Tibial artery (tissue), 4 donors: ENCODE measurements at regions of chr6 and their contacts with region 1.

Region 1: DNA sequence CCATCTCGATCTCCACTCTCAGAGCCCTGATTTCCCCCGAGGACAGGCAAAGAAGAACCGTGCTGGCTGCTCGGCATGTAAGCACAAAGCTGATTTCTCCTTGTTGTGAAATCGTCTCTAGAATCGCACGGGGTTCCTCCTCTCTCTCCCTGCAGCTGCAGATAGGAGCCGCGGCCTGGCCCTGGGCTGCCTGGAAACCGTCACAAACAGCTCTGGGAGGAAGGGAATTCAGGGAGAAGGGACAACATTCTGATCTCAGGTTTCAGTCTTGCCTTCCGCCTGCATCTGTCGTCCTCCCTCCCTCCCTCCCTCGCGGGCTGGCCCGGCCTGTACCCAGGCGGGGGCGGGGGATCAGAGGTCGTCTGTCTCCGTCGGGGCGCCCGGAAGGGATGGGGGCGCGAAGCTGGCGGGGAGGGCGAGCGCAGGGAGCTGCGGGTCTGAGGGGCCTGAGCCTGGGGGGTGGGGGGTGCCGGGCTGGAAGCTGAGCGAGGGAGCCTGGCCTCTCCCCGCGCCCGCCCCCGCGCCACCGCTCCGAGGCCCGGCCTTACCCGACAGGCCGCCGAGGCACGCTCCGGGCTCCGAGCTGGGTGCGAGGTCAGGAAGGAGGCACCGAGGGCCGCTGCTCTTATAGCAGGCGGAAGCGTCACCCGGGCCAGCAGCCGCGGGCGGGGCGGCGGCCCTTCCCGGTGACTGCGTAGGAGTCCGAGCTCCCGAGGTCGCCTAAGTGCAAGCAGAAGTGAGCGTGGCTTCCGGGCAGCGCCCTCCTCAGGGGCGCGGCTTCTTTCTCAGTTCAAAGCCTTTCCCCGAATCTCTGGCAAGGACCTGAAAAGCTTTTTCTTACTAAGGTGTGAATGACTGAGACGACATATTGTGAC is at the start of gene SERPINB1:
- DNase-seq: peak; percentile 88 to 93
- H3K4me3 ChIP-seq: peak within 1 kb of the TSS; percentile 68 to 78
- H3K27ac ChIP-seq: peak within 1 kb of the TSS; percentile 94 to 97
- H3K4me1 ChIP-seq: peaks cover 0 to 37% (median 30%) of the 10 kb centered on the region in 4 donors
- H3K27me3 ChIP-seq: no peaks in the 10 kb centered on the region
- CTCF ChIP-seq: no peak

Region 2: GRCh38 chr6:2791124-2791974 is 50.2 kb before region 1 on chr6:
- intact Hi-C with region 1: loop called (anchors 5 kb)
- DNase-seq: peak; percentile 76 to 84
- H3K4me3 ChIP-seq: peak overlapping the region; percentile 31 to 33
- H3K27ac ChIP-seq: peak overlapping the region; percentile 77 to 82
- H3K4me1 ChIP-seq: peaks cover 0 to 50% (median 24%) of the 10 kb centered on the region in 4 donors
- H3K27me3 ChIP-seq: no peaks in the 10 kb centered on the region
- CTCF ChIP-seq: peak; percentile 76 to 89

Region 3: GRCh38 chr6:2931970-2932748 is 90.7 kb after region 1 on chr6:
- intact Hi-C with region 1: loop called (anchors 5 kb)
- DNase-seq: peak; percentile 83 to 87
- H3K4me3 ChIP-seq: no peak overlapping the region
- H3K27ac ChIP-seq: no peak overlapping the region
- H3K4me1 ChIP-seq: peaks cover 0 to 7% (median 4%) of the 10 kb centered on the region in 4 donors
- H3K27me3 ChIP-seq: no peaks in the 10 kb centered on the region
- CTCF ChIP-seq: peak; percentile 93 to 99

Region 4: DNA sequence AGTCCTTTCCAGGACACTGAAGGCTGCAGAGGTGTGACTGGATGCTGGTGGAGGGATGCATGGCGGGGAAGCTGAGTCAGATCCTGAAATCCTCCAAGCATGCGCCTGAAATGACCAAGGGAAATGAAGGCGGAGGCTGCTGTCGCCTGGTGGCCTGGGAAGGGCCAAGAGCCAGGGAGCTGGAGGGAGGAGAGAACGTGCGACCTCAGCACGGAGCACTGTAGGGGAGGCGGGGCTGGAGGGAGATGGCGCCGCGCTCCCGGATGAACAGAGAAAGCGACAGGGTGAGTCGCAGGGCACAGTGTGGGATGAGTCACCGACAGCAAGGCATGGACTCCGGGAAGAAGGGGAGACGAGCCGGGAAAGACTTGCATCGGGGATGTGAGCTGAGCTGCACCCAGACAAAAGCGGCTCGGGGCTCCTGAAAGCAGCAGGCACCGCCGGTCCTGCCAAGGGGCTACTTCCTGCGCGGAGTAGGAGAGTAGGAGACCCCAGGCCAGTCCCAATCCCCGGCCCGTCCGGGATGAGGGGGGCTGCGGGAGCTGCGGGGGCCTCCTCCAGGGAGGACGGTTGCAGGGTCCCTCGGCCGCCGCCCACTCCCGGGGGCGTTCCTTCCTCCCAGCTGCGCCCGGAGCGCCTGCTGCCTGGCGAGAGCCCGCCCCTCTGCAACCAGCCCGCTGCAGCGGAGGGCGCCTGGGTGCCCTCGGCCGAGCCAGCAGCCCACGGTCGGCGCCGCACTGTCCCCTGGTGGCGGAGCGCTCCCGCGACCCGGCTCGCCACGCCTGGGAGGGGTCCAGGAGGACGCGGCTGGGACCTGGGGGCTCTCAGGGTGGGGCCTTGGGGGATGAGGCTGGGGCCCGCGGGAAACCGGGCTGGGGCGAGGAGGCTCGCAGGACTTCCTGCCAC is 147.2 kb after region 1 on chr6:
- intact Hi-C with region 1: loop called (anchors 5 kb)
- DNase-seq: peak; percentile 95 to 98
- H3K4me3 ChIP-seq: peak overlapping the region; percentile 82 to 92
- H3K27ac ChIP-seq: peak overlapping the region; percentile 95 to 97
- H3K4me1 ChIP-seq: peaks cover 0 to 26% (median 18%) of the 10 kb centered on the region in 4 donors
- H3K27me3 ChIP-seq: no peaks in the 10 kb centered on the region
- CTCF ChIP-seq: peak; percentile 93 to 94